Activated CD4-positive, alpha-beta T cell treated with anti-CD3 and anti-CD28 coated beads, Interleukin-2, amount 10 ng/mL, durations not matched to agents 24 days and 14 days (primary cell): ENCODE measurements at regions of chr4 and their contacts with region 1.

Region 1: DNA sequence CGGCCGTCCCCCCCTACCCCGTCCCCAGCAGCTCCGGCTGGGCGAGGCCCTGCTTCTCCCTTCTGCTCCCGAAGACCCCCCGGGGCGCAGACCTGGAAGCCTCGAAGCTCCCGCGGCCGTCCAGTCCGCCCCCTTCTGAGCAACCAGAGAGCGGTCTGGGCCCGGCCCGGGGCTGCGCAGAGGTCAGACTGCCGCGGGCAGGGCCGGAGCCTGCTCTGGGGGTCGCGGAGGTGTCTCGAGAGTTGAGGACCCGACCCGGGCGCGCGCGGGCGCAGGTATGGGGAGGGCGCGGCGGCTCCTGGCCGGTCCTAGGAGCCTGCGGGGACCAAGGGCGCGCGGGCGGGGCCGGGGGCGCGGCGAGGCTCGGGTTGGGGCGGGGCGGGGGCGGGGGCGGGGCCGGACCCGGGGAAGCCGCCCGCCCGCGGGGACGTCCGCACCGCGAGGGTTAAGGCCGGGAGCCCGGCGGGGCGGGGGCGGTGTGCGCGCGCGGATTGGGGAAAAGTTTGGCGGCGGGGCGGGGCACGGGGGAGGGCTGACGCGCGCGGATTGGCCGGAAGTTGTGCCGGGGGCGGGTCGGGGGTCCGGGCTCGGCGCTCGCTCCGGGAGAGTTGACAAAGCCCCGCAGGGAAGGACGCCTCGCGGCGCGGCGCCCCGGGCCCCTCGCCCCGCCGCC is at the start of gene FGFRL1:
- DNase-seq: peak; percentile 97
- H3K4me3 Mint-ChIP-seq: peak within 1 kb of the TSS; percentile 89
- H3K27ac Mint-ChIP-seq: peak within 1 kb of the TSS; percentile 92
- H3K4me1 Mint-ChIP-seq: peaks cover 13% of the 10 kb centered on the region
- H3K27me3 Mint-ChIP-seq: peaks cover 25% of the 10 kb centered on the region
- total RNA-seq, gene FGFRL1: 18.2 and 18.9 TPM in 2 replicates

Region 2: GRCh38 chr4:781493-782216 is 229.5 kb before region 1 on chr4:
- intact Hi-C with region 1: loop called (anchors 1 kb)
- DNase-seq: peak; percentile 100
- H3K4me3 Mint-ChIP-seq: peak overlapping the region; percentile 88
- H3K27ac Mint-ChIP-seq: peak overlapping the region; percentile 95
- H3K4me1 Mint-ChIP-seq: peaks cover 41% of the 10 kb centered on the region
- H3K27me3 Mint-ChIP-seq: peaks cover 15% of the 10 kb centered on the region

Region 3: DNA sequence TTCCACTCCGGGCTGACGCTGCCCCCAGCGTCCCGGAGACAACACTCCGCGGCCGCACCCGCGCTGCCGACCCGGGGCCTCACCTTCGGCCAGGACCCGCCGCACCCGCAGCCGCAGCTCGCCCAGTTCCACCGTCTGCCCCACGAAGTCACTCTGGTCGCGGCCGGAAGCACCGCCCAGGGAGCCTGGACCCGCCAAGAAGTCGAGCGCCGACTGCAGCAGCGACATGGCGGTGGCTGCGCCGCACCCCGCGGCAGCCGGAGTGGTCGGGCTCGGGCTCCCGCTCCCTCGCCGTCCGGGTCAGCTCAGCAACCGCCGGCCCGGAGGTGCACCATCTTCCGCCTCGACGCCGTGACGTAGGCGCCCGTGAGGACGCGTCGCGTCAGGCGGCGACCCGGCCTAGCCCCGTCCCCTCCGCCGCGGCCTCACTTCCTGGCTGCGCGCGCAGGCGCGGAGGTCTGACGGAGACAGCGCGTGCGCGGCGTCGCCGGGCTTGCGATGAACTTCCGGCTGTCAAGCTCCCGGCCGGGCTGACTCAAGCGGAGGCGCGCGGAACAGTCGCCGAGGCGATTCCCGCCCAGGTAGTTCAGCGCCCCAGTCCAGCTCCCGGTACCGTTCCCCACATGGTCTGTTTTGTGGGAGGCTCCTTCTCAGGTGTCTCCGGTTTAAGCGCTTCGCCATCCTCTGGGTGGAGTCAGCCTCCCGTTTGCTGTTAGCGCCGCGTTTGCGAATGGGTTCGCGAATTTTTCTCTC is 79.0 kb before region 1 on chr4 and contains the starts of genes GAK and TMEM175:
- intact Hi-C with region 1: loop called (anchors 2 kb)
- DNase-seq: peak; percentile 100
- H3K4me3 Mint-ChIP-seq: peak within 1 kb of the TSS; percentile 99
- H3K27ac Mint-ChIP-seq: peak within 1 kb of the TSS; percentile 95
- H3K4me1 Mint-ChIP-seq: peaks cover 40% of the 10 kb centered on the region
- H3K27me3 Mint-ChIP-seq: no peaks in the 10 kb centered on the region
- total RNA-seq, gene GAK: 131 and 147 TPM in 2 replicates
- total RNA-seq, gene TMEM175: 12.7 and 13.9 TPM in 2 replicates

Region 4: DNA sequence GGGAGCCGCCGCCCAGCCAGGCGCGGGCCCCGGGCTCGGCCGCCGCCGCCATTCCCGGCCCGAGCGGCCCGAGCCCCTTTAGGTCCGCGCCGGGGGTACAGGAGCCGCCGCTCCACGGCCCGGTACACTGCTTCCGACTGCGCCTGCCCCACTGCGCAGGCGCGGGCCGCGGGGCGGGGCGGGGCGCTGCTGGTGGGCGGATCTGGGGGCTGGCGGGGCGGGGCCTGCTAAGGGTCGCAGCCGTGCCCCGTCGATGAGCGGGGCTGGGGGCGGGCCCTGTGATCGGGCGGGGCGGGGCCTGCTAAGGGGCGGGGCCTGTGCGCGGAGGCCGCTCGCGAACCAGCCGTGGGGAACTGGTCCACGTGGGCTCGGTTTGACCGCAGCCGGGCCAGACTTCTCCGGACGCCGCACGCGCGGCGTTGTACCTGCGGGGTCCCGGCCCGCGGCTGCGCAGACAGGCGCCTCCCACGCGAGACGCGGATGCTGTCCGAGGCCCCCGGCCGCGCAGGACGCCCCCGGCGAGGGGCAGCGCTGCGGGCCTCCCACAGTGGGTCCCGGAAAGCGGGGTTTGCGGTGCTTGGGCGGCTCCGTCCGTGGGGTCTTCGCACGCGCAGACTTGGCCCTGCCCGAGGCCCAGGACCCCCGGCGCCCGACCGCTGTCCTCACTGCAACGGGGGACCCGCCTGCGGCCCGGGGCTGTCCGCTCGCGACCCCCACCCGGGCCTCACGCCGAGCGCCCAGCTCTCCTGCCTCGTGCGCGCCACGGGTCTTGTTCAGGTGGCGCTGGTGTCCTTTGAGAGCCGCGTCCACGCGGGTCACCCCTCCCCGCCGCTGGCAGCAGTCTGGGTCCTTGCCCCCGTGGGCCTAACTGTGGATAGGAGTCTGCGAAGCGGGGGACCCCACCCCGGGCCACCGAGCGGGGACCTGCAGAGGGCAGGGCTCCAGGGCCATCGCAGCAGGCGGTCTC is 37.4 kb before region 1 on chr4 and contains the start of gene DGKQ:
- intact Hi-C with region 1: loop called (anchors 1 kb)
- DNase-seq: peak; percentile 95
- H3K4me3 Mint-ChIP-seq: peak within 1 kb of the TSS; percentile 67
- H3K27ac Mint-ChIP-seq: no peak within 1 kb of the TSS
- H3K4me1 Mint-ChIP-seq: peaks cover 5% of the 10 kb centered on the region
- H3K27me3 Mint-ChIP-seq: no peaks in the 10 kb centered on the region
- total RNA-seq, gene DGKQ: 15.2 and 16.6 TPM in 2 replicates

Region 5: DNA sequence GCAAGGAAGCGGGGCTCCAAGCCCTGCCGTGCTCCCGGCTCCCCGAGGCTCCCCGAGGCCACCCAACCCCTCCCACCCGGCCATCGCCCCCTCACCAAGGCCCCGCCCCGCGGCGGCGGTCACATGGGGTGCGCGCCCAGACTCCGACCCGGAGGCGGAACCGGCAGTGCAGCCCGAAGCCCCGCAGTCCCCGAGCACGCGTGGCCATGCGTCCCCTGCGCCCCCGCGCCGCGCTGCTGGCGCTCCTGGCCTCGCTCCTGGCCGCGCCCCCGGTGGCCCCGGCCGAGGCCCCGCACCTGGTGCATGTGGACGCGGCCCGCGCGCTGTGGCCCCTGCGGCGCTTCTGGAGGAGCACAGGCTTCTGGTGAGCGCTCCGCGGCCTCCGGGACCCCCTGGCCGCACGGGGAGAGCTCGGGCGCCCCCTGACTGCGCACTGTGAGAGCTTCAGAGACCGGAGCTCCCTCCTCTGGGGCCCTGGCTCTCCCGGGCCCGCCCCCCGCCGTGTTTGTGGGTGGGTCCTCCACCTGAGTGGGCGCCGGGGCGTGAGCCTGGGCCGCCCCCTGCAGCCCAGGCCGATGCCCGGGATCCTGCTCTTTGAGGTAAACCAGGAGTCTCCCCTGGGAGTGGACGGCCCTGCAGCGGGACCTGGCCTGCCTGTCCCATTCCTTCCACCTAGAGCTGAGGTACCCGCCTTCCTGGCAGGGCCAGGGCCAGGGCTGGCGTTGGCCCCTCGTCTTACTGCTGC is 24.1 kb before region 1 on chr4 and contains the start of gene IDUA:
- intact Hi-C with region 1: loop called (anchors 1 kb)
- DNase-seq: peak; percentile 96
- H3K4me3 Mint-ChIP-seq: peak within 1 kb of the TSS; percentile 86
- H3K27ac Mint-ChIP-seq: peak within 1 kb of the TSS; percentile 87
- H3K4me1 Mint-ChIP-seq: peaks cover 15% of the 10 kb centered on the region
- H3K27me3 Mint-ChIP-seq: no peaks in the 10 kb centered on the region
- total RNA-seq, gene IDUA: 30.4 and 31.2 TPM in 2 replicates

Region 6: GRCh38 chr4:1026115-1026514 is 15.0 kb after region 1 on chr4:
- intact Hi-C with region 1: no loop called
- DNase-seq: peak; percentile 86
- H3K4me3 Mint-ChIP-seq: no peak overlapping the region
- H3K27ac Mint-ChIP-seq: no peak overlapping the region
- H3K4me1 Mint-ChIP-seq: peaks cover 9% of the 10 kb centered on the region
- H3K27me3 Mint-ChIP-seq: no peaks in the 10 kb centered on the region

Region 7: DNA sequence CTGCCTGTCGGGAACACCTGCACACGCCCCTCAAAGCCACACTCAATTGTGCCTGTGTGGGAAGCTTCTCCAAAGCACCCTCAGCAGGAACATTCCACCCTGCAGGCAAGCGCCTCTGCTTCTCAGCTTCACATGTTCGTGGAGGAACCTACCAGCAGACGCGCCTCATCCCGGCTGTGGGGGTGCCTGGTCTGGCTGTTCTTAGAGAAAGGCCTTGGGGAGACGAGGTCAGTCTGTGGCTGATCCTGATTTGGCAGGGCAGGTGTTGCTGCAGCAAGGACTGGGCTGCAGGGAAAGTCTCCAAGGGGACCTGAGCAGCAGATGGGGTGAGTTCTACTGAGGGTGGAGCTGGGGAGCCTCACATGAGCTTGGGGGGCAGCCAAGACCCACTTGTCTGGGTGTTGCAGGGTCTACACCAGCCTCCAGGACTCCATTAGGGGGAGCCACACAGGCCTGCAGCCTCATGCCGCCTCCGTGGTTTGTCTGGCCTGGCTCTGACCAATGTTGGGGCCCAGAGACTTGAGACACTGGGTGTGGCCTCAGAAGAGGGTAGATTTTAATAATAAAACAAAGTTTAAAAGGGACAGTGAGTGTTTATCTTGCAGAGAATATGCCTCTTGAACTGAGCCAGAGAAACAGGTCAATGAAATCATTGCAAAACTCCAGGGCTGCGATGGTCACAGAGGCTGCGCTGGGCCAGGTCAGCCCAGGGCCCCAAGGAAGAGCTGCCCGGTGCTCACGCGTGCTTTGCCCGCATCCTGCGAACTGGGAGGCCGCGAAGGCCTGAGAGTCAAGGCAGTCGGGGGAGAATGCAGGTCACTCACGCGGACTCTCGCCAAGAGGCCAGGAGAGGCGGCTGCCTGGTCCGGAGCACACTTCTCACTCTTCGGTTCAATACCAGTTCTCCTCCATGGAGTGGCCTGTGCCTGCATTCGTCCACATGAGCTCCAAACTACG is 81.1 kb after region 1 on chr4:
- intact Hi-C with region 1: no loop called
- DNase-seq: no peak
- H3K4me3 Mint-ChIP-seq: no peak overlapping the region
- H3K27ac Mint-ChIP-seq: no peak overlapping the region
- H3K4me1 Mint-ChIP-seq: no peaks in the 10 kb centered on the region
- H3K27me3 Mint-ChIP-seq: no peaks in the 10 kb centered on the region

Region 8: DNA sequence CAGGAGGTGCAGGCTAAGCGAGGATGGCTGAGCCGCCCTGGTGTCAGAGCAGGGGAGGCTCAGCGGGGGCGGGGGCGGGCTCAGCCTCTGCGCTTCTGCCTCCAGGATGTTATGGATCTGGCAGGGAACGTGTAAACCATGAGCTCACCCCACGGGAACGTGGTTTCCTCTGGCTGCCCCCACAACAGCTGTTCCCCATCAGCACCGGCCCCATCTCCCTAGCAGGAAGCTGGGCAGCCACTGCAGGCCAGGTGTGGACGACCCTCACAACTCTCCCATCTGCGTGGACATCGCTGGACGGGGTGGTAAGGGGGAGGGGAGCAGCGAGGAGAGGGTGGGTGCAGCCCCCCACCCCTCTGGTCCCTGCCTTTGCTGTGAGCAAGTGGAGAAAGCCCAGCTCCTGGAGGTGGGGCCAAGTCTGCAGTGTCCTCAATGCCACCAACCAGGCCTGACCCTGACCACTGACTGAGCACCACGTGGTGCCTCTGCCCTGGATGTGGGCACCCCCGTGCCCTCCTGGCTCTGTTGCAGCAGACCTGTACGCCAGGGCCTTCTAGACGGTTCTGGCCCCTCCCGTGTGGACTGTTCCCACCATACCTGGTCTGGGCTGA is 189.4 kb after region 1 on chr4:
- intact Hi-C with region 1: loop called (anchors 5 kb)
- DNase-seq: no peak
- H3K4me3 Mint-ChIP-seq: peak overlapping the region; percentile 75
- H3K27ac Mint-ChIP-seq: peak overlapping the region; percentile 99
- H3K4me1 Mint-ChIP-seq: peaks cover 38% of the 10 kb centered on the region
- H3K27me3 Mint-ChIP-seq: no peaks in the 10 kb centered on the region

Region 9: GRCh38 chr4:1346781-1347409 is 335.7 kb after region 1 on chr4 and contains the start of gene UVSSA:
- intact Hi-C with region 1: loop called (anchors 5 kb)
- DNase-seq: peak; percentile 100
- H3K4me3 Mint-ChIP-seq: peak within 1 kb of the TSS; percentile 98
- H3K27ac Mint-ChIP-seq: peak within 1 kb of the TSS; percentile 94
- H3K4me1 Mint-ChIP-seq: peaks cover 35% of the 10 kb centered on the region
- H3K27me3 Mint-ChIP-seq: no peaks in the 10 kb centered on the region
- total RNA-seq, gene UVSSA: 28.3 and 28.4 TPM in 2 replicates